Activated CD4-positive, alpha-beta memory T cell treated with anti-CD3 and anti-CD28 coated beads for 36 hours (primary cell): ENCODE measurements at regions of chr1 and their contacts with region 1.

Region 1: DNA sequence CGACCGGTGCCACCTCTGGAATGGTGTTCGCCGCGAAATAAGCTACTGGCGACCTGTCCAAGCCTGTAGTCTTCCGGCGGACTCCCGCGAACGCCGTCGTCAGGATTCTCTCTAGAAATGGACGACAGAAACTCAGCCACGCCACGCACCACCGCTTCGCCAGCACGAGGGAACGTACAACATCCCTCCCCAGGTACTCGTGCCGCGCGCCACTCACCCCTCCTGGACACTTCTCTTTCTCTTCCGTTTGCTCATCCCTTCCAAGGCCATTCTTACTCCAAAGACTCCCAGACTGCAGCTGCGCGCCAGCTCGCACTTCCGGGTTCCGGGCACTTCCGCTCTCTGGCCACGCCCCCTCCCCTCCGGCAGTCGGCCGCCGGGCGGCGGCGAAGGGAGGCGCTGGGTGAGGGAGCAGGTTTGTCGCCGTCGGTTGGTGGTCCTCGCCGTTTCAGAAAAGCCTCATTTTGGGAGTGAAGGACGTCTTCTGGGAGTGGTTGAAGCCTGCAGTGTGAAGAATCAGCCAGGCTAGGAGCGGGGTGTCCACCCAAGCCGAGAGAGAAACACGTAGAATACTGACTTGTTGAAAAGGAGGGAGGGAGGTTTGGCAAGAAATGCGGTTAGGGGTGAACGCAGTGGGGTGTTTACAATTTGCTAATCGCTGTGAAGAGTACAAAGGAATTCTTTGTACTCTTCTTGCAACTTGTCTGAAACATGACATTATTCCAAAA is at the start of gene RBM34:
- DNase-seq: peak; percentile 96
- H3K4me3 Mint-ChIP-seq: peak within 1 kb of the TSS; percentile 95
- H3K27ac Mint-ChIP-seq: peak within 1 kb of the TSS; percentile 98
- H3K4me1 Mint-ChIP-seq: peaks cover 15% of the 10 kb centered on the region
- H3K27me3 Mint-ChIP-seq: no peaks in the 10 kb centered on the region
- total RNA-seq, gene RBM34: 108 to 120 TPM

Region 2: GRCh38 chr1:235105051-235106043 is 55.8 kb before region 1 on chr1:
- CTCF ChIA-PET with region 1: interaction called, 5 read pairs
- POLR2A ChIA-PET with region 1: interaction called, 5 read pairs
- intact Hi-C with region 1: loop called (anchors 1 kb)
- DNase-seq: peak; percentile 40
- H3K4me3 Mint-ChIP-seq: peak overlapping the region; percentile 67
- H3K27ac Mint-ChIP-seq: peak overlapping the region; percentile 68
- H3K4me1 Mint-ChIP-seq: peaks cover 39% of the 10 kb centered on the region
- H3K27me3 Mint-ChIP-seq: no peaks in the 10 kb centered on the region

Region 3: GRCh38 chr1:235128456-235129328 is 32.4 kb before region 1 on chr1 and contains the start of gene TOMM20:
- CTCF ChIA-PET with region 1: no interaction called
- POLR2A ChIA-PET with region 1: interaction called, 16 read pairs
- intact Hi-C with region 1: loop called (anchors 1 kb)
- DNase-seq: peak; percentile 98
- H3K4me3 Mint-ChIP-seq: peak within 1 kb of the TSS; percentile 86
- H3K27ac Mint-ChIP-seq: peak within 1 kb of the TSS; percentile 94
- H3K4me1 Mint-ChIP-seq: peaks cover 41% of the 10 kb centered on the region
- H3K27me3 Mint-ChIP-seq: no peaks in the 10 kb centered on the region
- total RNA-seq, gene TOMM20: 127 to 142 TPM

Region 4: DNA sequence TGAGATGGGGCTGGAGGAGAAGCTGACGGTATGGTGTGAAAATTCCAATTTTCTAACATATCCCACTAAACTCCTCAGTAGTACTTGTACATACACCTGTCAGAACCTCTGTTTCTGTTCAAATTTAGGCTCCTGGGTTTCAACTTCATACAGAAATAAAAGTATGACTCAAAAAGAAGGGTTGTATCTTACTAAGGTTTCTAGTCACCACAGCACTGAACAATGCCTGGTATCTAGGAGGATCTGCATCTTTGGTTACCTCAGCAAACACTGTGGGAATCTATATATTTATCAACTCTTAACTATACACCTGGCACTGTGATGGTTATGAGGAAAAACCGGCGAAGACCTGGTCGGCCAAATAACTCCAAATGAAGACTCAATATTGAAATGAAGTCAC is 13.9 kb before region 1 on chr1:
- CTCF ChIA-PET with region 1: no interaction called
- POLR2A ChIA-PET with region 1: interaction called, 11 read pairs
- intact Hi-C with region 1: no loop called
- DNase-seq: no peak
- H3K4me3 Mint-ChIP-seq: no peak overlapping the region
- H3K27ac Mint-ChIP-seq: peak overlapping the region; percentile 14
- H3K4me1 Mint-ChIP-seq: peaks cover 21% of the 10 kb centered on the region
- H3K27me3 Mint-ChIP-seq: no peaks in the 10 kb centered on the region

Region 5: GRCh38 chr1:235206533-235207208 is 45.5 kb after region 1 on chr1:
- CTCF ChIA-PET with region 1: interaction called, 3 read pairs
- POLR2A ChIA-PET with region 1: no interaction called
- intact Hi-C with region 1: loop called (anchors 2 kb)
- DNase-seq: no peak
- H3K4me3 Mint-ChIP-seq: no peak overlapping the region
- H3K27ac Mint-ChIP-seq: peak overlapping the region; percentile 89
- H3K4me1 Mint-ChIP-seq: peaks cover 30% of the 10 kb centered on the region
- H3K27me3 Mint-ChIP-seq: no peaks in the 10 kb centered on the region

Region 6: DNA sequence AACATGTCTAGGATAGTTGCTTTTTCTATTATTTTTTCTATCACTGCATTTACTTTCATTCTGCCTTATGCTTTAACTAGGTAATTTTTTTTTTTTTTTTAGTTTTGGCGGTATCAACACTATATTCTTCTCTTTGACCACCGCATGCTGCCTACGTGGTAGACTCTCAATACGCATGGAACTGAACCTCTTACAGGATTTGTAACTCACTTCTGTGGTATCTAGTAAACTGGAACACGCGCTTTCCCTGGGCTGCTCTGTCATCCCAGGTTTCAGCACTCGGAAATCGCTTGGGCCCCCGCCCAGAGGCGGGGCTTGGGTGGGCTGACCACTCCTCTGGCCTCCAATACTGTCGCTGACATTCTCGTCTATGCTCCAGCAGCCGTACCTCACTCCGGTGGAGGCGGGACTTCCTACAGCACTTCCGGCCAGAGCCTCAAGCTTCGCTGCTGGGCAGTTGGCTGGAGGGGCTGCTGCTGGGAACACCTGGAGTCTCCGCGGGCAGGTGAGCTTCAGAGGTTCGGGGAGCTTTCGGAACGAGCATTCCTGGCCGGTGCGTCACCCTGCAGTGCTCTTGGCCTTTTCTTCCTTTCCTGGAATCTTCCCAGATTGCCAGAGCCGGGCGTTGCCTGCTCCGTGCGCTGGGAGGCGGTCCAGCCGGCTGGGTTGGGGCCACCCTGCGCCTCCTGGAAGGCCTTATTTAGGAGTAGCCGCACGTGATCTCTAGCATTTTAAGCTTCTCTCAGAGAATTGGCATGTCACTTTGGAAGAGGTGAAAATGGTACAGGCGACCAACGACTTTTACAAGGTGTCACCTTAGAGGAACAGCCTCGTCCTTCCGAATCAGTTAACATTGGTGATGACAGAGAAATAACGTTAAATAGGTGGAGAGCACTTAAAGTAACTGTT is 206.1 kb after region 1 on chr1 and contains the start of gene TBCE:
- CTCF ChIA-PET with region 1: no interaction called
- POLR2A ChIA-PET with region 1: no interaction called
- intact Hi-C with region 1: loop called (anchors 1 kb)
- DNase-seq: peak; percentile 95
- H3K4me3 Mint-ChIP-seq: peak within 1 kb of the TSS; percentile 97
- H3K27ac Mint-ChIP-seq: peak within 1 kb of the TSS; percentile 76
- H3K4me1 Mint-ChIP-seq: peaks cover 28% of the 10 kb centered on the region
- H3K27me3 Mint-ChIP-seq: no peaks in the 10 kb centered on the region
- total RNA-seq, gene TBCE: 22.7 to 26.3 TPM